Heart left ventricle (tissue), 16 donors: ENCODE measurements at regions of chr3 and their contacts with region 1.

Region 1: DNA sequence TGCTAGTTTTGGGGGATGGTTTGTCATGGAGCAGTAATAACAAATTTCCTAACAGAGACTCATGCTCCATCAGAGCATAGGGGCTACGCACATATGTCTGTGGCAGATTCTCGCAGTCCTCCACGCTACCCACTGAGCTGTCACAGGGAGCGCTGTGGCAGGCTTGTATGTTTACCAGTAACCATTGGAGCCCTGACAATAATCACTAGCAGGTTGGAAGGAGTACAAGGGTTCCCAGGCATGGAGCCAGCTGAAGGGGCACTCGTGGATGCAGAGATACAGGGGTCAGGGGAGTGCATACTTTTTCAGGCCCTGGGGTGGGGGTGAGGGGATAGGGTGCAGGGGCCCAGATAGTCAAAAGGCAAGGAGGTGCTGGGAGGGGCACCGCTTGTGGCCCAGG is 7.9 kb upstream of the GP9 start:
- DNase-seq: peak; percentile 72 to 89 (median 78)
- ATAC-seq: peak; percentile 83 to 93 (median 88)
- H3K4me3 ChIP-seq: no peak overlapping the region
- H3K27ac ChIP-seq: peak overlapping the region in 11 of 12 donors; percentile 28 to 87 (median 73)
- H3K4me1 ChIP-seq: peaks cover 0 to 29% (median 19%) of the 10 kb centered on the region in 12 donors
- H3K27me3 ChIP-seq: no peaks in the 10 kb centered on the region
- CTCF ChIP-seq: peak in 3 of 12 donors; percentile 10 to 19 (median 15)
- POLR2A ChIP-seq: no peak

Region 2: GRCh38 chr3:128956440-128956839 is 96.2 kb before region 1 on chr3:
- intact Hi-C with region 1: no loop called
- DNase-seq: no peak
- ATAC-seq: no peak
- H3K4me3 ChIP-seq: no peak overlapping the region
- H3K27ac ChIP-seq: no peak overlapping the region
- H3K4me1 ChIP-seq: no peaks in the 10 kb centered on the region
- H3K27me3 ChIP-seq: no peaks in the 10 kb centered on the region
- CTCF ChIP-seq: no peak
- POLR2A ChIP-seq: no peak

Region 3: DNA sequence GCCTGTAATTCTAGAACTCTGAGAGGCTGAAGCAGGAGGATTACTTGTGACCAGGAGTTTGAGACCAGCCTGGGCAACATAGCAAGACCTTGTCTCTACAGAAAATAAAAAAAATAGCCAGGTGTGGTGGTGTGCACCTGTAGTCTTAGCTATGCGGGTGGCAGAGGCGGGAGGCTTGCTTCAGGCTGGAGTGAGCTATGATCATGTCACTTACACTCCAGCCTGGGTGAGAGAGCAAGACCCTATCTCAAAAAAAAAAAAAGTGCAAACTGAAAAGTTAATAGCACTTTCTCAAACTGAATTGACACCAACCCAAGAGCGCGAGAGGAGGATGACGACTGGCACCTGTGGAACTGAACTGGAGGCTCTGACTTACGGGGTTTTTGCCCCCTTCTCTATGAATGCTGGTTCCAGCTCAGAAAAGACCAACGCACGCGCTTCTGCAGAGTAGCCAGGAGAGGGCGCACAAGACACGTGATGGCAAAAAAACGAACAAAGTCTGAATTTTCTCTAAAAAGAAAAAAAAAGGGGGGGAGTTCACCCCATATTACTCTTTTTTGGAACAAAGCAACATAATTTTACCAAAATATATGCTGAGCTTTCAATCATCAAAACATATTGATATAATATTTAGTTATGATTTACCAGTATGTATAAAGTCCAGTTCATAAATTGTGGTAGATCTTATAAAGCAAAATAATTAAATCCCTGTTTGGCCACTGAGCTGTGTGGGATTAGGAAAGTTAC is 82.5 kb before region 1 on chr3:
- intact Hi-C with region 1: loop called in 3 of 10 experiments (anchors 5 kb)
- DNase-seq: peak in 3 of 5 donors; percentile 23 to 47 (median 39)
- ATAC-seq: peak in 2 of 4 donors; percentile 38 to 40
- H3K4me3 ChIP-seq: no peak overlapping the region
- H3K27ac ChIP-seq: peak overlapping the region in 4 of 12 donors; percentile 52 to 79 (median 64)
- H3K4me1 ChIP-seq: peaks cover 0 to 22% (median 12%) of the 10 kb centered on the region in 12 donors
- H3K27me3 ChIP-seq: no peaks in the 10 kb centered on the region
- CTCF ChIP-seq: peak; percentile 84 to 97 (median 92)
- POLR2A ChIP-seq: no peak

Region 4: GRCh38 chr3:129026728-129027543 is 25.7 kb before region 1 on chr3:
- intact Hi-C with region 1: loop called in 1 of 10 experiments (anchors 2 kb)
- DNase-seq: peak; percentile 91 to 95 (median 94)
- ATAC-seq: peak; percentile 87 to 96 (median 90)
- H3K4me3 ChIP-seq: peak overlapping the region; percentile 27 to 68 (median 57)
- H3K27ac ChIP-seq: peak overlapping the region in 11 of 12 donors; percentile 35 to 85 (median 74)
- H3K4me1 ChIP-seq: peaks cover 0 to 55% (median 35%) of the 10 kb centered on the region in 12 donors
- H3K27me3 ChIP-seq: no peaks in the 10 kb centered on the region
- CTCF ChIP-seq: peak; percentile 47 to 95 (median 74)
- POLR2A ChIP-seq: peak in 1 of 2 donors; percentile 78

Region 5: GRCh38 chr3:129087138-129087702 is 34.5 kb after region 1 on chr3:
- intact Hi-C with region 1: loop called in 1 of 10 experiments (anchors 5 kb)
- DNase-seq: peak in 4 of 5 donors; percentile 58 to 63 (median 60)
- ATAC-seq: peak; percentile 35 to 83 (median 78)
- H3K4me3 ChIP-seq: no peak overlapping the region
- H3K27ac ChIP-seq: peak overlapping the region; percentile 18 to 97 (median 82)
- H3K4me1 ChIP-seq: peaks cover 0 to 12% (median 7%) of the 10 kb centered on the region in 12 donors
- H3K27me3 ChIP-seq: no peaks in the 10 kb centered on the region
- CTCF ChIP-seq: no peak
- POLR2A ChIP-seq: no peak

Region 6: GRCh38 chr3:129120254-129121004 is 67.8 kb after region 1 on chr3:
- intact Hi-C with region 1: loop called in 3 of 10 experiments (anchors 2 to 5 kb)
- DNase-seq: peak; percentile 88 to 90 (median 90)
- ATAC-seq: peak; percentile 44 to 77 (median 58)
- H3K4me3 ChIP-seq: peak overlapping the region; percentile 66 to 97 (median 89)
- H3K27ac ChIP-seq: peak overlapping the region; percentile 73 to 97 (median 92)
- H3K4me1 ChIP-seq: peaks cover 10 to 47% (median 30%) of the 10 kb centered on the region in 12 donors
- H3K27me3 ChIP-seq: no peaks in the 10 kb centered on the region
- CTCF ChIP-seq: peak in 6 of 12 donors; percentile 8 to 54 (median 32)
- POLR2A ChIP-seq: peak in 1 of 2 donors; percentile 56

Region 7: GRCh38 chr3:129249276-129250065 is 196.8 kb after region 1 on chr3 and contains the start of gene COPG1:
- intact Hi-C with region 1: loop called in 9 of 10 experiments (anchors 1 to 10 kb)
- DNase-seq: peak; percentile 85 to 94 (median 87)
- ATAC-seq: peak; percentile 85 to 95 (median 94)
- H3K4me3 ChIP-seq: peak within 1 kb of the TSS; percentile 60 to 100 (median 96)
- H3K27ac ChIP-seq: peak within 1 kb of the TSS; percentile 72 to 97 (median 85)
- H3K4me1 ChIP-seq: peaks cover 0 to 53% (median 32%) of the 10 kb centered on the region in 12 donors
- H3K27me3 ChIP-seq: no peaks in the 10 kb centered on the region
- CTCF ChIP-seq: peak in 1 of 12 donors; percentile 14
- POLR2A ChIP-seq: peak; percentile 27 to 89
- total RNA-seq, gene COPG1: 78.6 to 121 (median 93.9) TPM